ENCODE measurements at regions of chr14 and their contacts with region 1.

Region 1: DNA sequence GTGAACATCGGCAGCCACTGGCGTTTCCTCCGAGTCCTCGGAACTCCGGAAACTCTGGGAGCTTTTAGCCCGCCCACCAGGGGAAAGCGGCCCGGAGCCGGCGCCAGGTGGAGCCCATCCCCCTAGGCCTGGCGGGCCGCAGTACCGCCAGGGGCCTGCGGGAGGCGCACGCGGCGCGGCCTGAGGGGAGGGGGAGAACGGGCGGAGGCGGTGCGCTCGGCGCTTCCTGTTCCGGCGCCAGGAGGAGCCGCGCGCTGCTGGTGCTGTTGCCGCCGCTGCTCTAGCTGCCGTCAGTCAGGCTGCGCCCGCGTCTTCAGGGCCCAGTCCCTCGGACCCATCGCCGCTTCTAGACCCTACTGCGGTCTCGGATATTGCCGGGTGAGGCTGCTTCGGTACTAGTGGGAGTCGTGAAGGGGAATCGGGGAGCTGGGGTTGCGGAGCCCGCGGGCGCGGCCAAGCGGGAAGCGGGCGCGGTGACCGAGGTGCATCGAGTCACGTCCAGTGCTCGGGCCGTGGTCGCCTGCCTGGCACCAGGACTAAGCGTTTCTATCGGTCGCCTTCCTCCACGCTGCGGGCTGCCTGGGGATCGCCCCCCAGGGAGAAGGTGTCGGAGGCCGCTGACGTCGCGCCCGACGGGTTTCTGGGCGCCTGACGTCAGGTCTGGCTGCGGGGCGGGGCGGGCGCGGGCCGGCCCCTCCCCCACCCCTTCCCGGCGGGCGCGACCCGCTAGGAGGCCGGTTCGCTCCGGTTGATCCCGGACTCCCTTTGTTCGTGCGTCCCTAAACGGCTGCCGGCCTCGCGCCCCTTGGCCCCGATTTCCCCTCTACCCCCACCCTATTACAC is at the start of gene MAPK1IP1L:
- DNase-seq: peak; percentile 92 to 97 (median 94)
- ATAC-seq: peak; percentile 89 to 98 (median 97)
- H3K4me3 ChIP-seq: peak within 1 kb of the TSS; percentile 74 to 99 (median 92)
- H3K27ac ChIP-seq: peak within 1 kb of the TSS; percentile 97 to 100 (median 100)
- H3K4me1 ChIP-seq: peaks cover 0 to 46% (median 32%) of the 10 kb centered on the region in 12 donors
- H3K27me3 ChIP-seq: no peaks in the 10 kb centered on the region
- CTCF ChIP-seq: peak; percentile 99 to 100 (median 100)
- POLR2A ChIP-seq: peak; percentile 80 to 93
- total RNA-seq, gene MAPK1IP1L: 58.9 to 159 (median 80.1) TPM

Region 2: GRCh38 chr14:54691525-54692283 is 359.9 kb before region 1 on chr14:
- intact Hi-C with region 1: no loop called
- DNase-seq: peak; percentile 80 to 86 (median 84)
- ATAC-seq: peak; percentile 67 to 82 (median 74)
- H3K4me3 ChIP-seq: no peak overlapping the region
- H3K27ac ChIP-seq: peak overlapping the region; percentile 44 to 94 (median 70)
- H3K4me1 ChIP-seq: peaks cover 3 to 81% (median 48%) of the 10 kb centered on the region in 12 donors
- H3K27me3 ChIP-seq: no peaks in the 10 kb centered on the region
- CTCF ChIP-seq: peak; percentile 84 to 92 (median 88)
- POLR2A ChIP-seq: no peak

Region 3: DNA sequence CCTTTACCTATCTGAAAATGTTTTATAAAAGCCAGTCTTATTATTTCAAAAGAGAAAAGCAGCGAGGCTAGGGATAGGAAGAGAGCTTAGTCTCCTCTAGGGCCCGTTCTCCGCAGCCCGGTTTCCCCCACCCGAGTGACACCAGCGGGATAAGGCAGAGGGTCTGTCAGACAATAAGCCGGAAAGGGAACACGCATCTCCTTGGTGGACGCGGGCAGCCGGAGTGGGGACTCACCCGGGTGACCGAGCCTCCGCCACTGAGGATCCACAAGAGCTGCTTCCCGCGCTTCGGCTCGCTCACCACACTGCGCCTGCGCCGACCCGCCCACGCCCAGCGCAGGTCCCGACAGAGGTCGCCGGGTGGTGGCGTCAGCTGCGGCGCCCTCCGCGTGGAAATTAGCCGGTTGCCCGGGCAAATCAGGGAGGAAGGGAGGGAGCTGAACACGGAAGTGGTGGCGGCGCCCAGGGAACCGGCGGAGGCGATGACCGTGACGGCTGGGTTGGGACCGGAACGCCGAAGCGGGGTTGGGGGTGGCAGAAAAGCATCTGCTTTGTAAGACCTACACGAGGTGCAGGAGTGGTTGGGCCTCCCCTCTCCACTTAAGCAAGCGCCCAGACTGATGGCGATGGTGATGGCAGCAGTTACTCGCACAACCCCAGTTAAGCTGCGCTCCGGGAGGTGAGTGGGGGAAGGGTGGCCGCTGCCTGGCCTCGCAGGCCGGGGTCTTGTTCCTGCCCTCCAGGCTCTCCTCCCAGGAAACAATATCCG is 24.7 kb before region 1 on chr14 and contains the starts of genes SOCS4 and WDHD1:
- intact Hi-C with region 1: loop called in 4 of 10 experiments (anchors 1 to 2 kb)
- DNase-seq: peak; percentile 94 to 98 (median 96)
- ATAC-seq: peak; percentile 99 to 100 (median 100)
- H3K4me3 ChIP-seq: peak within 1 kb of the TSS; percentile 56 to 92 (median 83)
- H3K27ac ChIP-seq: peak within 1 kb of the TSS; percentile 34 to 92 (median 86)
- H3K4me1 ChIP-seq: peaks cover 0 to 52% (median 25%) of the 10 kb centered on the region in 12 donors
- H3K27me3 ChIP-seq: no peaks in the 10 kb centered on the region
- CTCF ChIP-seq: peak in 7 of 12 donors; percentile 6 to 51 (median 25)
- POLR2A ChIP-seq: peak in 1 of 2 donors; percentile 67
- total RNA-seq, gene SOCS4: 8.9 to 20.7 (median 15.6) TPM
- total RNA-seq, gene WDHD1: 0.44 to 3.5 (median 2.2) TPM

Region 4: GRCh38 chr14:55062517-55063351 is 11.1 kb after region 1 on chr14:
- intact Hi-C with region 1: no loop called
- DNase-seq: peak; percentile 25 to 72 (median 63)
- ATAC-seq: peak; percentile 80 to 87 (median 84)
- H3K4me3 ChIP-seq: no peak overlapping the region
- H3K27ac ChIP-seq: peak overlapping the region in 6 of 12 donors; percentile 2 to 36 (median 28)
- H3K4me1 ChIP-seq: peaks cover 5 to 58% (median 20%) of the 10 kb centered on the region in 12 donors
- H3K27me3 ChIP-seq: no peaks in the 10 kb centered on the region
- CTCF ChIP-seq: no peak
- POLR2A ChIP-seq: no peak

Measured in heart left ventricle (tissue), 16 donors.